Activated T-helper 1 cell treated with anti-CD3 and anti-CD28 coated beads, Interleukin-12 subunit alpha, Interleukin-12 subunit beta, Interleukin-2, Interleukin-4 antibody, amounts not matched to agents 30 ng/mL and 10 ng/mL and 1 ng/mL, durations not matched to agents 14 hours and 24 hours and 36 hours (primary cell): ENCODE measurements at regions of chr9 and their contacts with region 1.

Region 1: DNA sequence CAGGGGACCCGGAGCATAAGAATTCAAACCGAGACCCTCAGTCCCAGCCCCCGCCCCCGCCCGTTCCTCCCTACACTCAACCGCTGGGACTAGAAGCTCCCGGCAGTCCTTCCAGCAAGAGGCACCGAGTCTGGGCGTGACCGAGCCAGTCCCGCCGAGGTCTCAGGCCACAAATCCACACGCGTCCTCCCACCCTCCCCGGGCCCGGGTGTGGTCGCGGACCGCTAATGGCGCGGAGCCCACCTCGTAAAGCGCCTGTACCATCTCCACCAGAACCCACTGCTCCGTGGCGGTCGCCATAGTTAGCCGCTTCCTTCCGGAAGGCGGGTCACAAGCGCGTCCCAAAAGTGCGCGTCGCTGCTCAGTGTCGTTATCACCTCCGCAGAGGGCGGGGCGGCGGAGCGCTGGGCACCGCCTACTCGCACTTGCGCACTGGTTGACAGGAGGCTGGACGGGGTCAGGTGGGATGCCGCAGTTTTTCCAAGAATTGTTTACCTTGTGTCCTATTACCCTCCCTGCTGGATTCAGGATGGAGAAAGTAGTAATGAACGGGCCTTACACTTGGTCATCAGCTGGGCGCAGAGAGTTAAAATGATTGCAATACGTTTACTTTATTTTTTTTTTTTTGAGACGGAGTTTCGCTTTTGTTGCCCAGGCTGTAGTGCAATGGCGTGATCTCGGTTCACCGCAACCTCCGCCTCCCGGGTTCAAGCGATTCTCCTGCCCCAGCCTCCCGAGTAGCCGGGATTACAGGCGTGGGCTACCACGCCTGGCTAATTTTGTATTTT is at the start of gene SPTLC1:
- DNase-seq: peak; percentile 93
- H3K4me3 Mint-ChIP-seq: peak within 1 kb of the TSS; percentile 97
- H3K27ac Mint-ChIP-seq: peak within 1 kb of the TSS; percentile 95
- H3K4me1 Mint-ChIP-seq: peaks cover 47% of the 10 kb centered on the region
- H3K27me3 Mint-ChIP-seq: no peaks in the 10 kb centered on the region
- total RNA-seq, gene SPTLC1: 60.2 and 62.3 TPM in 2 replicates

Region 2: DNA sequence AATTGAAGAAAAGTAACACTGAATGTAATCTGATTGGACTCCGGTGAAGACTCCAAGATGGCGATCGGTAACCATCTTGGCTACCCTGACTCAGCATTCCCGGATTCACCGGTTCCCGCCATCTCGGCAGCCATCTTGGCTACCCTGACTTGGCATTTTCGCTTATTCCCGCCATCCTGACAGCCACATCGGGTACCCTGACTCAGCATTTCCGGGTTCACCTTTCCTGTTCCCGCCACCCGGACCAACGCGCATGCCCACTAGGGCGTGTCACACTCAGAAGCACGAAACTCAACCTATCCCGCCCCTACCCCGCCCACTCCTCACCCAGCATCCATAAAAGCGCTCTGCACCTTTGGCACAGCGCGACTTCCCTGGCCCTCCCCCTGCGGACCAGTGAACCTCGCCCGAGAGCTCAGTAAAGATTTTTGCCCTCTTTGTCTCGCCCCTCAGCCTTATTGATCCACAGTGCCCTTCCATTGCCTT is 17.2 kb before region 1 on chr9:
- intact Hi-C with region 1: loop called (anchors 2 kb)
- DNase-seq: peak; percentile 57
- H3K4me3 Mint-ChIP-seq: peak overlapping the region; percentile 16
- H3K27ac Mint-ChIP-seq: peak overlapping the region; percentile 80
- H3K4me1 Mint-ChIP-seq: peaks cover 45% of the 10 kb centered on the region
- H3K27me3 Mint-ChIP-seq: no peaks in the 10 kb centered on the region

Region 3: DNA sequence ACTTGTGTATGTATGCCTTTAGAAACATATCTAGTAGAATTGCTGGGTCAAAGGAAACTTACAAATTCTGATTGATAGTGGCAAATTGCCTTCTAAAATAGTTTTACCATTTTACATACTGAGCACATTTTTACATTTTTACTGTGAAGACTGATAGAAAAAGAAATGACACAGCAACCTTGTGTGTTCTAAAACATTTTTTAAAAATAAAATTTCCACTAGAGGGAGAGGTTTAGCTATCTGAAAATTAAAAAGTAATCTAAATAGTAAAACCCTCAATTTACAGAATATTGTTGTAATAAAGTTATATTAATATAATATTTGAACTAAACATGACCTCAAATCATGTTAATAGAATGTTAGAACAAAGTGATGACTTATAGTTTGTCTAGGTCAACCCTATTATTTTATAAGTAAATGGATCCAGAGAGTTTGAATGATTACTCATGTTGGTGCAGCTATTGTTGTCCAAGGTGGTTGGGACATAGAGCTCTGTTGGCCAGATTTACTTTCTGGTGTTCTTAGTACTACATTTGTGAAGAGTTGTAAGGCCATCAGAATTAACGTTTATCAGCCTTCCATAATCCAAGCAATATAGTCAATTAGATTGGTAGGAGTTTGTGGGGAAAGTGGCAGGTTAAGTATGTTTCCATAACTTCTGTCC is 227.7 kb after region 1 on chr9:
- intact Hi-C with region 1: no loop called
- DNase-seq: no peak
- H3K4me3 Mint-ChIP-seq: no peak overlapping the region
- H3K27ac Mint-ChIP-seq: no peak overlapping the region
- H3K4me1 Mint-ChIP-seq: no peaks in the 10 kb centered on the region
- H3K27me3 Mint-ChIP-seq: no peaks in the 10 kb centered on the region